ENCODE measurements at regions of chr1 and their contacts with region 1.

Region 1: GRCh38 chr1:87335175-87335884 is 6.7 kb downstream of the LMO4 start:
- DNase-seq: peak; percentile 87
- H3K4me3 ChIP-seq: peak overlapping the region; percentile 57 to 78 (median 68)
- H3K27ac ChIP-seq: peak overlapping the region; percentile 98 to 99 (median 99)
- H3K4me1 ChIP-seq: peaks cover 13 to 61% (median 28%) of the 10 kb centered on the region in 4 donors
- H3K27me3 ChIP-seq: no peaks in the 10 kb centered on the region
- CTCF ChIP-seq: peak in 1 of 5 experiments; percentile 28
- EP300 ChIP-seq: no peak
- POLR2A ChIP-seq: no peak

Region 2: GRCh38 chr1:87684194-87684593 is 348.9 kb after region 1 on chr1:
- in situ Hi-C with region 1: no loop called
- intact Hi-C with region 1: loop called (anchors 10 kb)
- DNase-seq: peak; percentile 16
- H3K4me3 ChIP-seq: peak overlapping the region; percentile 13 to 45 (median 38)
- H3K27ac ChIP-seq: peak overlapping the region; percentile 56 to 79 (median 62)
- H3K4me1 ChIP-seq: peaks cover 0 to 31% (median 8%) of the 10 kb centered on the region in 4 donors
- H3K27me3 ChIP-seq: no peaks in the 10 kb centered on the region
- CTCF ChIP-seq: no peak
- EP300 ChIP-seq: no peak
- POLR2A ChIP-seq: no peak

Measured in transverse colon (tissue), 4 donors.